ENCODE measurements at regions of chr12 and their contacts with region 1.

Region 1: DNA sequence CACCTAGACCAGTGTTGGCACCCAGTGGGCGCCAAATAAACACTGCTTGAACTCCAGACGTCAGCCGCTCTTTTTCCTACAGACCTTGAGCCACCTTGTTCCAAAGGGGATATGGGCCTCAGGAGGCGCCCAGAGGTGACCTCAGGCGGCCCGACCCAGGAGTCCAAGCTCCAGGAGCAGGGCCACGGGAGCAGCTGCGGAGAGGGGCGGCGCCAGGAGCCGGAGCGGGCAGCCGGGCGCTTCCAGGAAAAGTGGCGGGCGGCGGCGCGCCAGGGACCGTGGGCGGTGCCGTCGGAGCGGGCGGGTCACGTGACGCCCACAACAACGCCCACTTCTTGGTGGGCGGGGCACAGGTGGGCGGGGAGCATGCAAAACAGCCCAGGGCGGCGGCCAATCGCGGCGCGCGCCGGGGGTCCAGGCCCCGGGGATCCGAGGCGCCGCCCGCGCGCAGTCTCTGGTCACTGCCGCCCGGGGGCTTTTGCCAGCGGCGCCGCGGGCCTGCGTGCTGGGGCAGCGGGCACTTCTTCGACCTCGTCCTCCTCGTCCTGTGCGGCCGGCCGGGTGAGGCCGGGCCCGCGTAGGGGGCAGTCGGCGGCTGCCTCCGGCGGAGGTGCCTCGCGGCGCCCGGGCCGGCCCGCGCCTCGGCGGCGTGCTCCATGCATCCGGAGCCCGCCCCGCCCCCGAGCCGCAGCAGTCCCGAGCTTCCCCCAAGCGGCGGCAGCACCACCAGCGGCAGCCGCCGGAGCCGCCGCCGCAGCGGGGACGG is at the start of gene ORAI1:
- DNase-seq: peak; percentile 98
- ATAC-seq: peak; percentile 70
- H3K4me3 Mint-ChIP-seq: peak within 1 kb of the TSS; percentile 94
- H3K27ac Mint-ChIP-seq: peak within 1 kb of the TSS; percentile 96
- H3K4me1 Mint-ChIP-seq: peaks cover 53% of the 10 kb centered on the region
- H3K27me3 Mint-ChIP-seq: no peaks in the 10 kb centered on the region
- CTCF ChIP-seq: no peak
- total RNA-seq, gene ORAI1: 85.8 and 86.3 TPM in 2 replicates

Region 2: GRCh38 chr12:121443193-121443870 is 182.9 kb before region 1 on chr12:
- CTCF ChIA-PET with region 1: no interaction called
- POLR2A ChIA-PET with region 1: no interaction called
- intact Hi-C with region 1: no loop called
- DNase-seq: peak; percentile 57
- ATAC-seq: peak; percentile 80
- H3K4me3 Mint-ChIP-seq: no peak overlapping the region
- H3K27ac Mint-ChIP-seq: peak overlapping the region; percentile 24
- H3K4me1 Mint-ChIP-seq: peaks cover 5% of the 10 kb centered on the region
- H3K27me3 Mint-ChIP-seq: no peaks in the 10 kb centered on the region
- CTCF ChIP-seq: peak; percentile 51

Region 3: GRCh38 chr12:121550974-121551634 is 75.2 kb before region 1 on chr12:
- CTCF ChIA-PET with region 1: interaction called, 168 read pairs
- POLR2A ChIA-PET with region 1: interaction called, 138 read pairs
- intact Hi-C with region 1: loop called (anchors 1 kb)
- DNase-seq: no peak
- ATAC-seq: no peak
- H3K4me3 Mint-ChIP-seq: no peak overlapping the region
- H3K27ac Mint-ChIP-seq: no peak overlapping the region
- H3K4me1 Mint-ChIP-seq: peaks cover 24% of the 10 kb centered on the region
- H3K27me3 Mint-ChIP-seq: no peaks in the 10 kb centered on the region
- CTCF ChIP-seq: no peak

Region 4: GRCh38 chr12:121590476-121591143 is 35.7 kb before region 1 on chr12:
- CTCF ChIA-PET with region 1: interaction called, 5 read pairs
- POLR2A ChIA-PET with region 1: interaction called, 46 read pairs
- intact Hi-C with region 1: loop called (anchors 1 kb)
- DNase-seq: peak; percentile 33
- ATAC-seq: peak; percentile 65
- H3K4me3 Mint-ChIP-seq: peak overlapping the region; percentile 81
- H3K27ac Mint-ChIP-seq: peak overlapping the region; percentile 98
- H3K4me1 Mint-ChIP-seq: peaks cover 40% of the 10 kb centered on the region
- H3K27me3 Mint-ChIP-seq: no peaks in the 10 kb centered on the region
- CTCF ChIP-seq: no peak

Region 5: GRCh38 chr12:121663610-121663929 is 37.3 kb after region 1 on chr12:
- CTCF ChIA-PET with region 1: interaction called, 31 read pairs
- POLR2A ChIA-PET with region 1: interaction called, 63 read pairs
- intact Hi-C with region 1: loop called (anchors 1 kb)
- DNase-seq: no peak
- ATAC-seq: no peak
- H3K4me3 Mint-ChIP-seq: peak overlapping the region; percentile 90
- H3K27ac Mint-ChIP-seq: peak overlapping the region; percentile 92
- H3K4me1 Mint-ChIP-seq: peaks cover 49% of the 10 kb centered on the region
- H3K27me3 Mint-ChIP-seq: no peaks in the 10 kb centered on the region
- CTCF ChIP-seq: no peak

Region 6: GRCh38 chr12:121773011-121773777 is 146.9 kb after region 1 on chr12:
- CTCF ChIA-PET with region 1: no interaction called
- POLR2A ChIA-PET with region 1: interaction called, 5 read pairs
- intact Hi-C with region 1: loop called (anchors 5 kb)
- DNase-seq: peak; percentile 72
- ATAC-seq: peak; percentile 91
- H3K4me3 Mint-ChIP-seq: no peak overlapping the region
- H3K27ac Mint-ChIP-seq: peak overlapping the region; percentile 66
- H3K4me1 Mint-ChIP-seq: peaks cover 17% of the 10 kb centered on the region
- H3K27me3 Mint-ChIP-seq: no peaks in the 10 kb centered on the region
- CTCF ChIP-seq: no peak